PC-9 (cell line): ENCODE measurements at regions of chr5 and their contacts with region 1.

Region 1: DNA sequence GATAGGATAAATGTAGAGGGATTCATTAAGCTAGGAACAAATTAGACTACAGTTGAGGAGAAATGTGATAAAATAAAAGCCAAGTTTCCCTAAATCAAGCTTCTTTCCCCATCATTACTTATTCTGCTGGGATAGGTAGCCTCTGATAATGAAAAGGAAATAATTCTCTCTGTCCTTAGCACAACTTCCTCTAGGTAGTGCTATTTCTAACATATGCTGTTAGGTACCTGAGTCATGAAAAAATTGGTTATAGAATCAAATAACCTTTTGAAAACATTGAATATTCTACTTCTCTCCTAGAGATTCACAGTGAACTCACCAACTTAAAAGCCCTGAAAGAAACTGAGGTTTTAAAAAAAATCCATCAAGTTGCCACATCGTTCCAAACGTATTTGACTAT is 1793.1 kb downstream of the EFNA5 start:
- DNase-seq: no peak
- H3K4me3 ChIP-seq: no peak overlapping the region
- H3K27ac ChIP-seq: no peak overlapping the region
- H3K4me1 ChIP-seq: peaks cover 2% of the 10 kb centered on the region; the same call in 1 of the 2 replicates
- H3K27me3 ChIP-seq: no peaks in the 10 kb centered on the region
- CTCF ChIP-seq: no peak

Region 2: GRCh38 chr5:105807951-105808350 is 69.6 kb before region 1 on chr5:
- CTCF ChIA-PET with region 1: no interaction called
- POLR2A ChIA-PET with region 1: interaction called, 10 read pairs
- intact Hi-C with region 1: no loop called
- DNase-seq: no peak
- H3K4me3 ChIP-seq: no peak overlapping the region
- H3K27ac ChIP-seq: no peak overlapping the region
- H3K4me1 ChIP-seq: no peaks in the 10 kb centered on the region
- H3K27me3 ChIP-seq: no peaks in the 10 kb centered on the region
- CTCF ChIP-seq: no peak

Region 3: GRCh38 chr5:105947423-105947822 is 69.8 kb after region 1 on chr5:
- CTCF ChIA-PET with region 1: interaction called, 12 read pairs
- POLR2A ChIA-PET with region 1: no interaction called
- intact Hi-C with region 1: no loop called
- DNase-seq: no peak
- H3K4me3 ChIP-seq: no peak overlapping the region
- H3K27ac ChIP-seq: no peak overlapping the region
- H3K4me1 ChIP-seq: no peaks in the 10 kb centered on the region
- H3K27me3 ChIP-seq: no peaks in the 10 kb centered on the region
- CTCF ChIP-seq: no peak